Endothelial cell of umbilical vein (primary cell): ENCODE measurements at regions of chr16 and their contacts with region 1.

Region 1: GRCh38 chr16:14285513-14286385 is 214.6 kb downstream of the MRTFB start:
- DNase-seq: peak; percentile 92
- H3K4me3 ChIP-seq: peak overlapping the region; percentile 83 to 99 (median 94)
- H3K27ac ChIP-seq: peak overlapping the region; percentile 55
- H3K4me1 ChIP-seq: peaks cover 2% of the 10 kb centered on the region
- H3K27me3 ChIP-seq: no peaks in the 10 kb centered on the region
- CTCF ChIP-seq: no peak
- POLR2A ChIP-seq: no peak

Region 2: GRCh38 chr16:13957197-13958078 is 328.3 kb before region 1 on chr16:
- CTCF ChIA-PET with region 1: no interaction called
- POLR2A ChIA-PET with region 1: no interaction called
- dilution Hi-C with region 1: no loop called
- intact Hi-C with region 1: loop called (anchors 10 kb)
- DNase-seq: peak; percentile 91
- H3K4me3 ChIP-seq: peak overlapping the region in 1 of 3 experiments; percentile 37
- H3K27ac ChIP-seq: peak overlapping the region; percentile 88
- H3K4me1 ChIP-seq: peaks cover 16% of the 10 kb centered on the region
- H3K27me3 ChIP-seq: no peaks in the 10 kb centered on the region
- CTCF ChIP-seq: no peak
- POLR2A ChIP-seq: no peak

Region 3: GRCh38 chr16:14300705-14301168 is 15.0 kb after region 1 on chr16:
- CTCF ChIA-PET with region 1: interaction called, 10 read pairs
- POLR2A ChIA-PET with region 1: no interaction called
- dilution Hi-C with region 1: no loop called
- intact Hi-C with region 1: loop called (anchors 1 kb)
- DNase-seq: peak; percentile 78
- H3K4me3 ChIP-seq: no peak overlapping the region
- H3K27ac ChIP-seq: no peak overlapping the region
- H3K4me1 ChIP-seq: peaks cover 10% of the 10 kb centered on the region
- H3K27me3 ChIP-seq: no peaks in the 10 kb centered on the region
- CTCF ChIP-seq: peak; percentile 43 to 70
- POLR2A ChIP-seq: no peak

Region 4: GRCh38 chr16:14378131-14378551 is 92.4 kb after region 1 on chr16:
- CTCF ChIA-PET with region 1: no interaction called
- POLR2A ChIA-PET with region 1: no interaction called
- dilution Hi-C with region 1: no loop called
- intact Hi-C with region 1: no loop called
- DNase-seq: no peak
- H3K4me3 ChIP-seq: no peak overlapping the region
- H3K27ac ChIP-seq: no peak overlapping the region
- H3K4me1 ChIP-seq: no peaks in the 10 kb centered on the region
- H3K27me3 ChIP-seq: no peaks in the 10 kb centered on the region
- CTCF ChIP-seq: no peak
- POLR2A ChIP-seq: no peak

Region 5: DNA sequence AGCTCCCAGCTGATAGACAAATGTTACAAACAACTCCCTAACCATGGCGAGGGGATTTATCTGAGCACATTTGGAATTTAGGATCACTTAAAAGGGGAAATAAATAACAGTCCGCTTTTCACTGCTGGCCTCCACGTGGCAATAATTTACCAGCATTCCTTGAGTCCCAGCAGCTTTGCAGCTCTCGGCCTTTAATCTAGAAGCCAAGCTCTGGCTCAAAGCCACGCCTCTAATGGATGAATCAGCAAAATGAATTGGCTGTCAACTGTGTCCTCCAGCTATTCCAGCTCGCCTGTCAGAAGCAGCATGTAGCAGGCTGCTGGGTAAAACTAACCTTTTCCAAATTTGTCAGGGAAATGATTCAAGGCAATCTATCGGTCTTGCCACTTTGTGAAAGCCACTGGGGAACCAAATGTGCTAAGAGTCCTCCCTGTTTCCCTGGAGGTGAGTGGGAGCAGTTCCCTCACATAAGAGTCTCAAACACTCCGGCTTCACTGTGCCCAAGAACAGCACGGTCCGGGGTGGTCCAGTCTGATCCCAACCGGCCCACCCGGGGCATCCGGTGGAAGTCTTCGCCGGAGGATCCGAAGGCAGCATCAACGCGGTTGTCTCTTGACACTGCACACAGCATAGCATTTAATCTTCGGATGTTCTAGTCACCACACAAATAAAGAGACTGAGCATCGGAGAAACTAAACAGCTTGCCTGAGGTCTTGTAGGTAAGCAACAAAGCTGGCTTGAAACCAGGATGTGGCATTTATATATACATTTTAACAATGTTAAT is 201.0 kb after region 1 on chr16:
- CTCF ChIA-PET with region 1: no interaction called
- POLR2A ChIA-PET with region 1: no interaction called
- dilution Hi-C with region 1: no loop called
- intact Hi-C with region 1: loop called (anchors 5 kb)
- DNase-seq: peak; percentile 91
- H3K4me3 ChIP-seq: peak overlapping the region in 2 of 3 experiments; percentile 9 to 13
- H3K27ac ChIP-seq: peak overlapping the region; percentile 55
- H3K4me1 ChIP-seq: peaks cover 28% of the 10 kb centered on the region
- H3K27me3 ChIP-seq: no peaks in the 10 kb centered on the region
- CTCF ChIP-seq: no peak
- POLR2A ChIP-seq: no peak

Region 6: GRCh38 chr16:14529010-14529669 is 243.4 kb after region 1 on chr16:
- CTCF ChIA-PET with region 1: interaction called, 4 read pairs
- POLR2A ChIA-PET with region 1: no interaction called
- dilution Hi-C with region 1: no loop called
- intact Hi-C with region 1: loop called (anchors 1 kb)
- DNase-seq: peak; percentile 89
- H3K4me3 ChIP-seq: no peak overlapping the region
- H3K27ac ChIP-seq: no peak overlapping the region
- H3K4me1 ChIP-seq: peaks cover 3% of the 10 kb centered on the region
- H3K27me3 ChIP-seq: no peaks in the 10 kb centered on the region
- CTCF ChIP-seq: peak; percentile 56 to 71
- POLR2A ChIP-seq: no peak

Region 7: GRCh38 chr16:14632692-14633569 is 347.2 kb after region 1 on chr16 and contains the start of gene BFAR:
- CTCF ChIA-PET with region 1: no interaction called
- POLR2A ChIA-PET with region 1: no interaction called
- dilution Hi-C with region 1: no loop called
- intact Hi-C with region 1: loop called (anchors 5 kb)
- DNase-seq: peak; percentile 97
- H3K4me3 ChIP-seq: peak within 1 kb of the TSS; percentile 85 to 95 (median 92)
- H3K27ac ChIP-seq: peak within 1 kb of the TSS; percentile 78
- H3K4me1 ChIP-seq: peaks cover 27% of the 10 kb centered on the region
- H3K27me3 ChIP-seq: no peaks in the 10 kb centered on the region
- CTCF ChIP-seq: no peak
- POLR2A ChIP-seq: peak; percentile 96
- total RNA-seq, gene BFAR: 73.5 and 84.6 TPM in 2 replicates